ENCODE measurements at regions of chr14 and their contacts with region 1.

Region 1: GRCh38 chr14:68780358-68781160 is 12.3 kb downstream of the ZFP36L1 start:
- DNase-seq: peak in 1 of 10 donors; percentile 77

Region 2: GRCh38 chr14:68734231-68734775 is 46.3 kb before region 1 on chr14:
- intact Hi-C with region 1: loop called (anchors 5 kb)
- DNase-seq: no peak

Measured in posterior cingulate gyrus (tissue), 11 donors.